SK-N-SH (cell line): ENCODE measurements at regions of chr3 and their contacts with region 1.

Region 1: DNA sequence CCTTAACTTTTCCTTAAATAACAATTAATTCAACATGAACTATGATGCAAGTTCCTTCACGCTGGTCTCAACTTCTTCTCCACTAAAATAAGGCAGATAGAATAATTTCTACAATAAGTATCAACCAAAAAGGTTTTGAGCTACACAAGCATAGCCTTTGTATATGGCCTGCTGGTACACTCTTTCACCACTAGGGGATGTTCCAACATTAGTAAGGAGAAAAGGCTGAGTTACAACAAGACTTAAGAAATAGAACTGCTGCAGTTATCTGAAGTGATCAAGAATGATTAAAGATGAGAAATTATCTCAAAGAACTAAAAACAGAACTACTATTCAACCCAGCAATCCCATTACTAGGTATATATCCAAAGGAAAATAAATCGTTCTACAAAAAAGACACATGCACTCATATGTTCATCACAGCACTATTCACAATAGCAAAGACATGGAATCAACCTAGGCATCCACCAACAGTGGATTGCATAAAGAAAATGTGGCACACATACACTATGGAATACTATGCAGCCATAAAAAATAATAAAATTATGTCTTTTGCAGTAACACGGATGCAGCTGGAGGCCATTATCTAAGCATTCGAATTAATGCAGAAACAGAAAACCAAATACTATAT is 14.4 kb downstream of the ATP13A3 start:
- DNase-seq: peak; percentile 40
- H3K4me3 ChIP-seq: no peak overlapping the region; a peak in 1 of 4 replicates
- H3K27ac ChIP-seq: peak overlapping the region in 1 of 2 experiments; percentile 29; a peak in 1 of 4 replicates
- H3K4me1 ChIP-seq: peaks cover 4 to 53% of the 10 kb centered on the region in 2 experiments
- H3K27me3 ChIP-seq: no peaks in the 10 kb centered on the region
- CTCF ChIP-seq: peak; percentile 97
- EP300 ChIP-seq: no peak
- RAD21 ChIP-seq: peak; percentile 94

Region 2: GRCh38 chr3:194458131-194458530 is 14.3 kb before region 1 on chr3:
- CTCF ChIA-PET with region 1: interaction called, 29 read pairs
- POLR2A ChIA-PET with region 1: no interaction called
- DNase-seq: no peak
- H3K4me3 ChIP-seq: no peak overlapping the region
- H3K27ac ChIP-seq: no peak overlapping the region
- H3K4me1 ChIP-seq: peaks cover 0 to 3% of the 10 kb centered on the region in 2 experiments; a peak in 2 of 4 replicates
- H3K27me3 ChIP-seq: no peaks in the 10 kb centered on the region
- CTCF ChIP-seq: peak; percentile 58
- EP300 ChIP-seq: no peak
- RAD21 ChIP-seq: no peak

Region 3: DNA sequence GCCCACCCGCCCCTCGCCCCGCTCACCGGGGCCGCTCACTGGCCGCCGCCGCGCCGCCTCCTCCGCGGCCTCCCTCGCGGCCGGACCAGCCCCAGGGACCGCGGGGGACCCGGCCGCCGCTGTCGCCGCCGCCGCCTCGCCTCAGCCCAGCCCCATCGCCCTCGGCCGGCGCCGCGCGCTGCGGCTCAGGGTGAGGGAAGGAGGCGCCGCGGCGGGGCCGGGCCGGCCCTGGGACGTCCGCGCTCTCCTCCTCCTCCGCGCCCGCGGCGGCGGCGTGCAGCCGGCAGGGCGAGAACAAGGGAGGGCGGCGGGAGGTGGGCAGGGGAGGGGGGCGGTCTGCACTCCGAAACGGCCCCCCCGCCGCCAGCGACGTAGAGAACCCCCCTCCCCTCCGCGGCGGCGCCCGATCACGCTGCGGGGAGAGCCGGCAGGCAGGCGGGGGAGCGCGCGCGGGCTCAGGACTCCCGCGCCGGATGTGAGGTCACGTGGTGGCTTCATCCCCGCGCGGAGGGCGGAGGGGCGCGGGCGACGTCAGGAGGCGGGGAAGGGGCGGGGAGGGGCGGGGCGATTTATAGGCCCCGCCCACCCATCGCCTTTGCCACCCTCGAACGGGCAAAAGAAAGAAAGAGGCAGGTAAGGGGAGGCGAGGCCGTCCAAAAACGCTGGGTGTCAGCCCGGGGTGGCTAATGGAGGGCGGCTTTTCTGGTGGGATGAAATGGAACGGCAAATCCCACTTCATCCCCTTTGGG is 14.3 kb after region 1 on chr3 and contains the start of gene ATP13A3:
- CTCF ChIA-PET with region 1: interaction called, 24 read pairs
- POLR2A ChIA-PET with region 1: no interaction called
- DNase-seq: peak; percentile 99
- H3K4me3 ChIP-seq: peak within 1 kb of the TSS; percentile 60 to 95
- H3K27ac ChIP-seq: peak within 1 kb of the TSS; percentile 56 to 84
- H3K4me1 ChIP-seq: peaks cover 8 to 25% of the 10 kb centered on the region in 2 experiments
- H3K27me3 ChIP-seq: no peaks in the 10 kb centered on the region
- CTCF ChIP-seq: no peak
- EP300 ChIP-seq: peak in 1 of 2 experiments; percentile 44; a peak in 1 of 4 replicates
- RAD21 ChIP-seq: no peak
- polyA plus RNA-seq, gene ATP13A3: 48.2 and 67.2 TPM in 2 replicates

Region 4: DNA sequence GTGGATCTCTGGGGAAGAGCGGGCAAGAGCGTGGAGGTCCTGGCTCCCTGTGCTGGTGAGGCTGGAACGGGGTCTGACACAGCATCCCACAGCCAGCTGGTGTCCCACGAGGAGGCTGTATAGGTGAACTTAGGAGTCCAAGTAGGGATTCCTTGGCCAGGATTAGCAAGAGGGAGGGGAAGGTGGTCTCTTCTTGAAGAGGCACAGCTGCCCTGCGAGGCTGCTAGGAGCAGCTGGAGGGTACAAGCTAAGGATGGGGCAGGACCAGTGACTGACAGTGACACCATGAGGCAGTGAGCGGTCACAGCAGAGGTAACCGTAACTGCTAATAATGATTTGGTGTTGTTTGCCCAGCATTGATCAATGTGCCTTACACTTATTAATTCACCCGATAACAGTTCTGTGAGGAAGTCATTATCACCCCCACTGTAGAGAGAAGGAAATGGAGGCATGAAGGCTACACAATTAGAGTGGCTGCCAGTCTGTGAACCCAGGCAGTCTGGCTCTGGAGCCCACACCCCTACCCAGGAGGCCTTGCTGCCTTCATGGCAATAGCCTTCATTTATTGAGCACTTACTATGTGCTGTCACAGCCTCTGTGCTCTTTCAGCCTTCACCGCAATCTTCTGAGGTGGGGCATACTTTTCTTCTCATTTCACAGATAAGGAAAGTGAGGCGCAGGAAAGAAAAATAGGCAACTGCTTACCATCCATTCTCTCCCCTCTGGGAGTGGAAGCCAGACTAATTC is 101.5 kb after region 1 on chr3:
- CTCF ChIA-PET with region 1: interaction called, 25 read pairs
- POLR2A ChIA-PET with region 1: no interaction called
- DNase-seq: peak; percentile 66
- H3K4me3 ChIP-seq: no peak overlapping the region
- H3K27ac ChIP-seq: peak overlapping the region in 1 of 2 experiments; percentile 93; a peak in 2 of 4 replicates
- H3K4me1 ChIP-seq: peaks cover 0 to 45% of the 10 kb centered on the region in 2 experiments; a peak in 3 of 4 replicates
- H3K27me3 ChIP-seq: no peaks in the 10 kb centered on the region
- CTCF ChIP-seq: peak; percentile 61
- EP300 ChIP-seq: no peak
- RAD21 ChIP-seq: peak; percentile 73

Region 5: GRCh38 chr3:194583604-194584318 is 111.4 kb after region 1 on chr3:
- CTCF ChIA-PET with region 1: interaction called, 13 read pairs
- POLR2A ChIA-PET with region 1: interaction called, 3 read pairs
- DNase-seq: peak; percentile 99
- H3K4me3 ChIP-seq: peak overlapping the region; percentile 73 to 78
- H3K27ac ChIP-seq: peak overlapping the region; percentile 67 to 91
- H3K4me1 ChIP-seq: peaks cover 8 to 16% of the 10 kb centered on the region in 2 experiments
- H3K27me3 ChIP-seq: no peaks in the 10 kb centered on the region
- CTCF ChIP-seq: no peak
- EP300 ChIP-seq: peak in 1 of 2 experiments; percentile 24; a peak in 1 of 4 replicates
- RAD21 ChIP-seq: no peak

Region 6: GRCh38 chr3:194592798-194593752 is 120.7 kb after region 1 on chr3:
- CTCF ChIA-PET with region 1: interaction called, 64 read pairs
- POLR2A ChIA-PET with region 1: no interaction called
- DNase-seq: peak; percentile 68
- H3K4me3 ChIP-seq: no peak overlapping the region
- H3K27ac ChIP-seq: peak overlapping the region in 1 of 2 experiments; percentile 94; a peak in 2 of 4 replicates
- H3K4me1 ChIP-seq: peaks cover 8 to 14% of the 10 kb centered on the region in 2 experiments; a peak in 2 of 4 replicates
- H3K27me3 ChIP-seq: no peaks in the 10 kb centered on the region
- CTCF ChIP-seq: no peak; the same call in 1 of the 2 replicates
- EP300 ChIP-seq: peak; percentile 65 to 99
- RAD21 ChIP-seq: peak; percentile 15; the same call in 1 of the 2 replicates